ENCODE measurements at regions of chr1 and their contacts with region 1.

Region 1: DNA sequence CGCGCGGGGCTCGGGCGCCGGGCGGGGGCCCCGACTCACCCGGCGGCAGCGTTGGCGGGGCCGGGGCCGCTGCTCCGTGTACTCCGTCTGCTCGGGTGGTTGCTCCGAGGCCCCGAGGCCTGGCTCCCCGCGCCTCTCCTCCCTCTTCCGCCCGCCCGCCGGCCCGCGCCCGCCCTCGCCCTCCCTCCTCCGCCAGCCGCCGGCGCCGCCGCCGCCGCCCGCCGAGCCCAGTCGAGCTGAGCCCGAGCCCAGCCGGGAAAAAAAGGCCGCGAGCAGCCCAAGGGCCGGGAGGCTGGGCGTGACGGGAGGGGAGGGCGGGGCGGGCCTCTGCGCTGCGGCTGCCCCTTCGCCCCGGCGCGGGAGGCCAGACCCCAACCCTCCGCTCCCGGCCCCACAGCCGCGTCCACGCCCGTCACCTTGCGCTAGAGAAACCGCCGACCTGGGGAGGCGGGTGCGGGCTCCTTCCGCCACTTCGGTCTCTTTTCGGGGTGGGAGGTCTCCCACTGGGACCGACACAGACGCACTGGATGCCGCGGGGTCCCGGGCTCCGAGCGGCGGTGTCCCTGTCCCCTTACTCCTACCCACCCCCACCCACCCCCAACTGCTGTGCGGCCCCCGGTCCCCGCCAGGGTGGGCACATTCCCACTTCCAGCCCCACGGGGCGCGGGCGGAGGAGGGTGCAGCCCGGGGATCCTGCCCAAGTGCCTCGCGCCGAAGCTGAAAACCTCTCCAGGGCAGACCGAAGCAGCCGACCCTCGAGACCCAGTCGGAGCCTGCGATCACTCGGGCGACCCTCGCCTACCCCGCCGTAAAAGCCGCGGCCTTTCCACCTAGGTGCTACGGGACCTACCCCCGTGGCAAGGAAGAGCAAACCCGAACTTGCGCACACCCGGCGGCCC is at the start of gene CERS2:
- DNase-seq: no peak
- H3K4me3 ChIP-seq: peak within 1 kb of the TSS; percentile 73 to 98 (median 90)
- H3K27ac ChIP-seq: peak within 1 kb of the TSS; percentile 93 to 98 (median 98)
- H3K4me1 ChIP-seq: peaks cover 63 to 80% (median 77%) of the 10 kb centered on the region in 4 donors
- H3K27me3 ChIP-seq: no peaks in the 10 kb centered on the region
- CTCF ChIP-seq: no peak
- EP300 ChIP-seq: no peak
- POLR2A ChIP-seq: no peak
- total RNA-seq, gene CERS2: 91.8 to 130 (median 117) TPM

Region 2: DNA sequence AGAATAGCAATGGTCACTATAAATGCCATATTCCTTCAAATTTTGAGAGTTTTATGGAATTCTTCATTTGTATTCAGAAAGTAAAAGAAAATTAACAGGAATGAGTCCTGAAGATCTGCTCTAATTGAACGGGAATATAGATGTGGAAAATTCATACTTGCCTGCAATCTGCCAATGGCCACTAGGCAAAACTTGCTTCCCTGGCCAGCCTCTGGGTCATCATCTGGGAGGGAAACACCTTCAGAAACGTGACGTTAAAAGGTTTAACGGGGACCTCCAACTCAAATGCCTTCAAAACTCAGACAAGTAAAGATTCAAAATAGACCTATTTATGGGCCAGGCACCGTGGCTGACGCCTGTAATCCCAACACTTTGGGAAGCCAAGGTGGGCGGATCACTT is 145.1 kb before region 1 on chr1:
- intact Hi-C with region 1: no loop called
- DNase-seq: no peak
- H3K4me3 ChIP-seq: no peak overlapping the region
- H3K27ac ChIP-seq: no peak overlapping the region
- H3K4me1 ChIP-seq: no peaks in the 10 kb centered on the region
- H3K27me3 ChIP-seq: no peaks in the 10 kb centered on the region
- CTCF ChIP-seq: peak in 1 of 3 experiments; percentile 32
- EP300 ChIP-seq: no peak
- POLR2A ChIP-seq: no peak

Region 3: GRCh38 chr1:150876119-150876454 is 98.7 kb before region 1 on chr1:
- intact Hi-C with region 1: loop called (anchors 5 kb)
- DNase-seq: no peak
- H3K4me3 ChIP-seq: peak overlapping the region; percentile 75 to 99 (median 96)
- H3K27ac ChIP-seq: peak overlapping the region; percentile 93 to 100 (median 96)
- H3K4me1 ChIP-seq: peaks cover 0 to 30% (median 27%) of the 10 kb centered on the region in 4 donors
- H3K27me3 ChIP-seq: no peaks in the 10 kb centered on the region
- CTCF ChIP-seq: no peak
- EP300 ChIP-seq: no peak
- POLR2A ChIP-seq: no peak

Region 4: DNA sequence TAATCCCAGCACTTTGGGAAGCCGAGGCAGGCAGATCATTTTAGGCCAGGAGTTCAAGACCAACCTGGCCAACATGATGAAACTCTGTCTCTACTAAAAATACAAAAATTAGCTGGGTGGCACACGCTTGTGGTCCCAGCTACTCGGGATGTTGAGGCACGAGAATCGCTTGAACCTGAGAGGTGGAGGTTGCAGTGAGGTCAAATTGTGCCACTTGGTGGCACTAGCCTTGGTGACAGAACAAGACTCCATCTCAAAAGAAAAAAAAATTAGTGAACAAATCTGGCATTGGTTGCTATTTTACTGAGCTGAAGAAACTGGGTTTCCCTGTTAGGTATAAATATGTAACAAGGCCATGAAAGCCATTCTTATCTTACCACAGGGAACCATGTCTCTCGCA is 252.8 kb after region 1 on chr1:
- intact Hi-C with region 1: no loop called
- DNase-seq: no peak
- H3K4me3 ChIP-seq: no peak overlapping the region
- H3K27ac ChIP-seq: no peak overlapping the region
- H3K4me1 ChIP-seq: peaks cover 0 to 4% (median 3%) of the 10 kb centered on the region in 4 donors
- H3K27me3 ChIP-seq: no peaks in the 10 kb centered on the region
- CTCF ChIP-seq: no peak
- EP300 ChIP-seq: no peak
- POLR2A ChIP-seq: no peak